ENCODE measurements at regions of chr15 and their contacts with region 1.

Region 1: GRCh38 chr15:48861813-48862431 is 16.0 kb upstream of the EID1 start:
- DNase-seq: peak; percentile 61
- H3K4me3 Mint-ChIP-seq: no peak overlapping the region
- H3K27ac Mint-ChIP-seq: no peak overlapping the region
- H3K4me1 Mint-ChIP-seq: peaks cover 9% of the 10 kb centered on the region
- H3K27me3 Mint-ChIP-seq: peaks cover 2% of the 10 kb centered on the region

Region 2: GRCh38 chr15:48748535-48748934 is 113.4 kb before region 1 on chr15:
- CTCF ChIA-PET with region 1: no interaction called
- intact Hi-C with region 1: no loop called
- DNase-seq: no peak
- H3K4me3 Mint-ChIP-seq: no peak overlapping the region
- H3K27ac Mint-ChIP-seq: no peak overlapping the region
- H3K4me1 Mint-ChIP-seq: no peaks in the 10 kb centered on the region
- H3K27me3 Mint-ChIP-seq: no peaks in the 10 kb centered on the region

Region 3: GRCh38 chr15:48975472-48976419 is 113.8 kb after region 1 on chr15:
- CTCF ChIA-PET with region 1: interaction called, 21 read pairs
- intact Hi-C with region 1: loop called (anchors 1 kb)
- DNase-seq: peak; percentile 80
- H3K4me3 Mint-ChIP-seq: peak overlapping the region; percentile 39
- H3K27ac Mint-ChIP-seq: no peak overlapping the region
- H3K4me1 Mint-ChIP-seq: no peaks in the 10 kb centered on the region
- H3K27me3 Mint-ChIP-seq: peaks cover 14% of the 10 kb centered on the region

Region 4: DNA sequence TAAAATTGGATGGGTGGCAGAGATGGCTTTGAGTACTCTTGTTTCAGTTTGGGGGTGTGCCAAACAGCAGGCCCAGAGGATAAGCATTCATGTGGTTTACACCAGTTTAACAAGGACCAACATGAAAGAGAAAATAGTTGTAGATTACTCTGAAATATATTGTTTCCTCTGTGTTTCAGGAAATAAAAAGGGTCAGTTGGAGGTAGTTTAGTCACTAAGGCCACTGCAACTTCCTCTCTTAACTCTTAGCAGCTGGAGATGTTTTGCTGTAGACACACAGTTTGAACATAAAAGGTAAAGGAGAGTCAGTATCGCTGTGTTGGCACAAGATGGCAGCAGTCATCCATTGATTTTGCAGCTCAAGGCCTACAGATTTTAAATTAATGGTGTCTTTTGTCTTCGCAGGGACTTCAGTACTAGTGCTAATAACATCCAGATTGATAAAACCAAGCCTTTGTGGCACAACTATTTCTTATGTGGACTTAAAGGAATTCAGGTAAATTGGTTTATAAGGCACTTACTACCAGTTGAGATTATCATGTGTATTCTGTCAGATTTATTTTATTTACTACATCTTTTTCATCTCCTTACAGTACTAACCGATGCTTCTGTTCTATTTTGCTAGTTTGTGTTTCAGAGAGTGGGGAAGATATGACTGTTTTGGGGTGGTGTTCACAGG is 373.7 kb after region 1 on chr15:
- CTCF ChIA-PET with region 1: interaction called, 3 read pairs
- intact Hi-C with region 1: loop called (anchors 2 kb)
- DNase-seq: peak; percentile 67
- H3K4me3 Mint-ChIP-seq: no peak overlapping the region
- H3K27ac Mint-ChIP-seq: no peak overlapping the region
- H3K4me1 Mint-ChIP-seq: peaks cover 3% of the 10 kb centered on the region
- H3K27me3 Mint-ChIP-seq: no peaks in the 10 kb centered on the region

Region 5: DNA sequence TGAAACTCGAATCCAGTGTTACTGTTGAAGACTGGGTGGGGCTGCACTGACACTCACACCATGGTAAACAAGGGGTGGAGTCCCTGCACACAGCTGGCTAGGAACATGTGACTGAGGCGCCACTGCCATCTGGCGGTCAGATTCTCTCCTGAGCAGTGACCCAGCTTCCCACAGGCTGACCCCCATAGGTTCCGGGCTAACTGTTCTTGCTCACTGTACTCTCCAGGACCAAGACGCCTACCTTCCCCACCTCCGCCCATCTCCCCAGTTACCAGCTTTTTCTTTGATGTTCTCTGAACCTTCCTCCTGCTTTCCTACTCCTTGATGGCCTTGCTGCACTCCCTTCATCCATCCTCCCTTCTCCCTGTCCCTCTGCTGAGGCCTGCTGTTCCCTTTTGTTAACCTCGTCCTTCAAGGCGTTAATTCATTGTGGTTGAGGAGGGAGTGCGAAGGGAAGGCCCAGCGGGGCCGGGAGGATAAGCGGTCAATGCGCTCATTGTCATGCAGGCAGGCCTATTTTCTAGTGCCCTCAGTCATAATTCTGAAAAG is 1141.9 kb after region 1 on chr15:
- CTCF ChIA-PET with region 1: no interaction called
- intact Hi-C with region 1: loop called (anchors 2 kb)
- DNase-seq: peak; percentile 74
- H3K4me3 Mint-ChIP-seq: no peak overlapping the region
- H3K27ac Mint-ChIP-seq: no peak overlapping the region
- H3K4me1 Mint-ChIP-seq: peaks cover 1% of the 10 kb centered on the region
- H3K27me3 Mint-ChIP-seq: peaks cover 6% of the 10 kb centered on the region

Region 6: DNA sequence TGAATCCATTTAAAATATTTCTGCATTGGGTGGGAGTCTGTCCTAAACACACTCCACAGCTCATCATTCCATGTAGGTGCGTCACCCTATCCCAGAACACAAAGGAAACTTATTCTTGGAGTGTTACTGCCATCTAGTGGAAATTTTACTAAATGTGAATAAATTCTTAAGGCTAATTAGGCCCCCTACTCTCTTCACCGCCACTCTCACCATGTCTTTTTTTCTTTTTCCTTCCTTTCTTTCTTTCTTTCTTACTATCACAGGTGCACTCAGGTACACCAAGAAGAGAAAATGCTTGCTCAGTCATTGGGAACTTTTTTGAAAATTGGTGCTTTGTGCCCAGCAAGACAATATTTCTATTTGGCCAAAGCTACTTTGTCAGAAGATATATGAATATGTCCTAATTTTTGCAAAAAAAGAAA is 1283.5 kb after region 1 on chr15:
- CTCF ChIA-PET with region 1: interaction called, 6 read pairs
- intact Hi-C with region 1: loop called (anchors 1 kb)
- DNase-seq: no peak
- H3K4me3 Mint-ChIP-seq: no peak overlapping the region
- H3K27ac Mint-ChIP-seq: no peak overlapping the region
- H3K4me1 Mint-ChIP-seq: peaks cover 13% of the 10 kb centered on the region
- H3K27me3 Mint-ChIP-seq: no peaks in the 10 kb centered on the region

Measured in activated naive CD4-positive, alpha-beta T cell treated with anti-CD3 and anti-CD28 coated beads for 36 hours (primary cell).